ENCODE measurements at regions of chr19 and their contacts with region 1.

Region 1: GRCh38 chr19:29811125-29812079 is at the start of gene CCNE1:
- DNase-seq: peak; percentile 92 to 96 (median 95)
- H3K4me3 ChIP-seq: peak within 1 kb of the TSS; percentile 56
- H3K27ac ChIP-seq: peak within 1 kb of the TSS in 1 of 2 donors; percentile 46
- H3K4me1 ChIP-seq: peaks cover 4% of the 10 kb centered on the region
- H3K27me3 ChIP-seq: no peaks in the 10 kb centered on the region
- CTCF ChIP-seq: no peak
- EP300 ChIP-seq: no peak
- POLR2A ChIP-seq: no peak
- total RNA-seq, gene CCNE1: 0.36 to 1.8 (median 0.98) TPM

Region 2: DNA sequence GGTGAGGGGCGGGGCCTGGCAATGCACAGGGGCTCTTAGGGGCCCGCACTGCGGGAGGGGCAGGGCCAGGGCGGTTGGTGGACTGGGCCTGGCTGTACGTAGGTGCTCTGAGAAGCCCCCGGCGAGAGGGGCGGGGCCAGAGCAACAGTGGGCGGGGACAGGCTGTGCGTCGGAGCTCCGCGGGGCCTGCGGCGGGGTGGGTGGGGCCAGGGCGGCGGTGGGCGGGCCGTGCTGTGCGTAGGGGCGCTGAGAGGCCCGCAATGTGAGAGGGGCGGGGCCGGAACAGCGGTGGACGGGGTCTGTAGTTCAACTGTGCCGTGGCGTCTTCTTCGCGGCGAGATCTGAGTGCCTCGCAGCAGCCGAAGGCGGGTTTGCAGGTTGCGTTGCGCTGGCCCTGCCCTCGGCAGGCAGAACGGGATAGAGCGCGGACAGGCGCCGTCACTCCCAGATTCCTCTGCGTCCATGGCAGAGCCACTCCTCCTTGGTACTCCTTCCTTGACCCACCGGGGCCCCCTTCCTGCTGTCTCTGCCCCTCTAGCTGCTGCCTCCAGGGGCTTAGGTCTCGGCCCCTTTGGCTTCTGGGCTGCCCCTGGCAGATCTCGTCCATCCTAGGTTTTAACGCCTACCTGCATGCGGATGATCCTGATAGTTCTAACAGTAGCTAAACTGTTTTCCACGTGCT is 33.6 kb after region 1 on chr19:
- intact Hi-C with region 1: loop called in 1 of 4 experiments (anchors 1 kb)
- DNase-seq: peak; percentile 93 to 97 (median 96)
- H3K4me3 ChIP-seq: peak overlapping the region; percentile 74
- H3K27ac ChIP-seq: peak overlapping the region; percentile 63 to 90
- H3K4me1 ChIP-seq: peaks cover 7% of the 10 kb centered on the region
- H3K27me3 ChIP-seq: no peaks in the 10 kb centered on the region
- CTCF ChIP-seq: no peak
- EP300 ChIP-seq: no peak
- POLR2A ChIP-seq: no peak